ENCODE measurements at regions of chr5 and their contacts with region 1.

Region 1: DNA sequence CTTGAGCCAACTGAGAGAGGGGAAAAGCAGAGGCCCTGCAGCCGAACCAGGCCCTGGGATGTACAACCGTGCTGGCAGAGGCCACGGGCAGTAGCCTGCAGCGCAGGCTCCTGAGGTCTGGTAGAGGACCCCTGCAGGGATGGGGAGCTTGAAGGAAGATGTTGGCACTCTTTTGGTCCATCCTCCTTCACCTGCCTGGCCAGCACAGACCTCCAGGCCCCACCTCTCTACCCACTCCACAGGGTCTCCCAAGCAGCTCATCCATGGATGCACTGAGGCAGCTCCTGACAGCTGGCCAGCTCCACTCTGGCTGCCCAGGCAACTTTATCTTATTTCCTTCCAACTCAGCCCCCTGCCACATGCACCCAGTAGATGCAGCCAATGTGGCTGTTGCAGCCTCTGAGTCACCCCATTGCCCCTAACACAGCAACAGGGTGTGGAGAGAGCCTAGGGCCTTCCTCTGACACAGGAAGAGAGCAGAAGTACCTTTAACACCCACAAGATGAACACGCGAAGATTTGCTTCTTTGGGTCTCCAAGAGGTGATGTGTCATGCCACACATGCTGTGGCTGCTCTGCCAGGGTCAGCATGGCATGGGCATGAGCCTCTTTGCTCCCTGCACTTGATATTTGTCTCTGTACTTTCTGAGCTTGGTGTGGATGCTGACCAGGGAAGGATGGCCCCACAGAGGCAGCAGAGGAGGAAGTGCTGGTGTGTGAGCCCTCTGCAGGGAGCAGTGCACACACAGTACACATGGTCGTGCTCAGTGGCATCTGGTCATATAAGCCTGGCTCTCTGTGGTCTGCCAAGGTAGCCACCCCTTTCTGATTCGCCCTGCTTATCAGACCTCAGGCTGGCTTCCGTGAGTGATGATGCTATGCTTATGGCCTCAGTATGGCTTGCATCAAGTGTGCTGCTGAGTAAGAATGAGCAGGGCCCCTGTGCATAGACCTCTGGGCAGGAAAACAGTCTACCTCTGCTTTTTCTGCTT is 117.2 kb downstream of the NRG2 start:
- DNase-seq: peak; percentile 54 to 59
- ATAC-seq: peak; percentile 90 to 94 (median 94)
- H3K4me3 ChIP-seq: no peak overlapping the region
- H3K4me3 Mint-ChIP-seq: peak overlapping the region; percentile 72
- H3K27ac ChIP-seq: peak overlapping the region; percentile 63
- H3K27ac Mint-ChIP-seq: peak overlapping the region; percentile 84 to 94
- H3K4me1 ChIP-seq: peaks cover 39% of the 10 kb centered on the region
- H3K4me1 Mint-ChIP-seq: peaks cover 43 to 48% of the 10 kb centered on the region in 2 donors
- H3K27me3 ChIP-seq: peaks cover 1% of the 10 kb centered on the region
- H3K27me3 Mint-ChIP-seq: peaks cover 2 to 7% of the 10 kb centered on the region in 2 donors
- CTCF ChIP-seq: no peak

Region 2: DNA sequence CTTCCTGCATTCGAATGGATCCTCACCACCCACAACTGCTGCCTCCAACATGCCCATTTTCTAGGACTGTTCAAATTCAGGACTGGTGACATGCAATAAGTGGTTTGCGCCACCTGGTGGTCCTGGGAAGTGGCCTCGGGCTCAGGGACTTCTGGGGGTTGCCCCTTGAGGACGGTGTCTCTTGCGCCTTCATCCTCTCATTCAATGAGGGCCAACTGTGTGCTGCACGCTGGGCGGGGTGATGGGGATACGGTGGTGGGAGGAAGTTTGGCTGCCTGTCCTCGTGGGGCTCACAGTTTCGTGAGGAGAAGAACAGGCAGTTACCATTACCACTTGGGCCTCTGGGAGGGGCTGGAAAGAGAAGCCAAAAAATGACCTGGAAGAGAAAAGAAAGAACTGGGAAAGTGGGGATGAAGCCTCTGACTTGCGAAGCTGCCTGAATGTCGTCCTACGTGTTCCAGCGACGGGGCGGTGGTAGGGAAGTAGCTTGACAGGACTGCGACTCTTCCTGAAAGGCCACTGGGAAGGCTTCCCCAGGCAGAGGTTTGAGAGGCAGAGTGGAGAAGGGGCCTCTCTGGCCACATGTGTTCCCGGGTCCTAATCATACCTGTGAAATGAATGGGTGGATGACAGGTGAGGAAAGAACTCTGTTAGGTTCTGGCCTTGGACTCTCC is 81.3 kb before region 1 on chr5:
- intact Hi-C with region 1: loop called (anchors 1 kb)
- DNase-seq: peak; percentile 63 to 83
- ATAC-seq: no peak
- H3K4me3 ChIP-seq: no peak overlapping the region
- H3K4me3 Mint-ChIP-seq: peak overlapping the region; percentile 21
- H3K27ac ChIP-seq: no peak overlapping the region
- H3K27ac Mint-ChIP-seq: no peak overlapping the region
- H3K4me1 ChIP-seq: peaks cover 14% of the 10 kb centered on the region
- H3K4me1 Mint-ChIP-seq: peaks cover 11 to 21% of the 10 kb centered on the region in 2 donors
- H3K27me3 ChIP-seq: peaks cover 4% of the 10 kb centered on the region
- H3K27me3 Mint-ChIP-seq: peaks cover 0 to 2% of the 10 kb centered on the region in 2 donors
- CTCF ChIP-seq: peak; percentile 65